ENCODE measurements at regions of chr4 and their contacts with region 1.

Region 1: GRCh38 chr4:52983563-52984303 is 121.6 kb downstream of the RASL11B start:
- DNase-seq: no peak
- ATAC-seq: peak; percentile 80

Region 2: GRCh38 chr4:52234561-52235440 is 748.9 kb before region 1 on chr4:
- intact Hi-C with region 1: loop called (anchors 10 kb)
- DNase-seq: no peak
- ATAC-seq: peak; percentile 94

Region 3: DNA sequence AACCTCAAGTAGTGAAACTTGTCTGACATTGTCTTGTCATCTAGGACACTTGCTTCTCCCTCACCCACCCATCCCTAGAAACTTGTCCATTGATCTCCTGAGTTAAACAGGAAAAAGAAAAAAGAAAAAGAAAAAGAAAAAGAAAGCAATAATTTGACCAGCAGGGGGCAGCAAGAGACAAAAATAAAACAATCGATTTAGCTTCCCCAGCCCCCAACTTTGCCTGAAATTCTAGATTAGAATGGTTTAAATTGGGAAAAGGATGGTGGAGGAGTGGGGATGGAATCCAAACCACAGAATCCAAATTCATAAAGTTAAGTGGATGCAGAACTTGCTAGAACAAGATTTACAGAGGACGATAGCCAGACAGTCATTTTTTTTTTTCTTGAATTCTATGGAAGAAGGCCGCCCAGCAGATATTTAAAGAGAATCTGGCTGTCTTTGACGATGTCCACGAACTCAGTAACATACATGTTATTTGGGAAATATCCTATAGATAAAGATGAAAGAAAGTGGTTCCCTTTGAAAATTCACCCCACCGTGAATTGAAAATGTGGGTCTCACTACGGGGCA is 607.5 kb before region 1 on chr4:
- intact Hi-C with region 1: loop called (anchors 5 kb)
- DNase-seq: no peak
- ATAC-seq: peak; percentile 44